ENCODE measurements at regions of chr12 and their contacts with region 1.

Region 1: DNA sequence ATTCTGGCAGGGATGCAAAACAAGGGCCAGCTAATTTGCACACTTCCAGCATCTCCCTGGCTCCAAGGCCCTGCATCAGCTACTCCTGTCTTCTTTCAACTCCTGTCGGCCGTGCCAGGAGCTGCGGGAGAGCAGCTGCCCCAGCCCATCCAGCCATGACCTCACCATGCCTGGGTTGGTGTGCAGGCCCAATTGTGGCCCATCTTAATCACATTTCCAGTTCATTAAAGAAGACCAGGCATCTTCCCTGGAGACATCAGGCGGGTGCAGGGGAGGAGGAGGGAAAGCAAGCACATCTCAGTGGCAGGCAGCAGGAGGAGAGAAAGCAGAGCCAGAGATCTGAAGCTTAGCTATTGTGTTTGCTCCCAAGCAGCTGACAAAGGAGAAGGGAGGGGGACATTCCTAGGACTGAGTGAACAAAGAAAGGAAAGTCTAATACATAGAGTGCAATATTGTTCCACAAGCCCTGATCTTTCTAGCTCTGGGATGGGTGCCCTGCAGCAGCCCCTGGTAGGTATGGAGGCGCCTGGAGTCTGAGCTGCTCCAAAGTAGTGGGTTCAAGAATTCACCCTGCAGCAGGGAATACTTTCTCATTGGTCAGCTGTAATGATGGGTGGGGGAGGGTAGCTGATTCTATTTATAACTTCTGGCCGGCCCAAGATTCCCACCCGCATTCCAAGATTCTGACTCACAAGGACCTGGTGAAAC is 40.1 kb downstream of the VWF start:
- DNase-seq: no peak

Region 2: DNA sequence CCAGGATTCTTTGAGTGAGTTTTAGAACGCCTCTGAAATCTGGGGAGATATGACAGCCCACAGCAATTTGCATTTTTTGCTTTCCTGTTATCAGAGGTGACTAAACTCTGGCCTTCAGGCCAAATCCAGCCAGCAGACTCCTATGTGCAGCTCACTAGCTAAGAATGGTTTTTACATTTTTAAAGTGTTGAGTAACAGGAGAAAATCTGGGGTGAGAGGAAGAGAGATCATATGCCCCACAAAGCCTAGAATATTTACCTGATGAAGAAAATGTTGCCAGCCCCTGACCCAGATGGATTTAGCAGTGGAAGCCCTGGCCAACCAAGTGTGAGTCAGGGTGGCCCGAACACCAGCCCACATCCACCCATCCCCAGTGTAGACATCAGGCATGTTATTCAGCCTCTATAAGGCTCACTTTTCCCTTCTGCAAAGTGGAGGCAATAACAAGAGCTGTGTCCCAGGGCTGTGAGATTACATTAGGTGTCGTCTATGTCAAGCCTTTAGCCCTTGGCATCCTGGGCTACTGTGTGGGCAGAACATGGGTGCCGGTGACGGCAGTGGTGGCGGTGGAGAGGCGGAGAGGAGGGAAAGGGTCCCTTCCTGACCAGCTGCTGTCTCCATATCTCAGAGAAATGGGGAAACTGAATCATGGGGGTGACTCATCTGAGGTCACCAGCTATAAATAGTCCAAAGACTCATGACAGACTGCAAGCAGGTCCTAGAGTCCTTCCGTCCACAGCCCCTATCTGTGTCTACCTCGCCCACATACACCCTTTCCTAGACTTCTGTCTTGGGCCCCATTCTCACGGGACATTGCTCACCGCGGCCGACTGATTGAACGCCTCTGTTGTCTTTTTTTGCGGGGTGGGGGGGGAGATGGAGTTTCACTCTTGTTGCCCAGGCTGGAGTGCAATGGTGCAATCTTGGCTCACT is 83.2 kb after region 1 on chr12:
- intact Hi-C with region 1: loop called (anchors 5 kb)
- DNase-seq: peak; percentile 86

Measured in cardiac septum (tissue), 1 donor.